HEK293 (cell line): ENCODE measurements at regions of chr16 and their contacts with region 1.

Region 1: GRCh38 chr16:4517812-4518680 is 20.5 kb downstream of the CDIP1 start:
- H3K4me3 ChIP-seq: no peak overlapping the region
- H3K27ac ChIP-seq: no peak overlapping the region
- H3K4me1 ChIP-seq: no peaks in the 10 kb centered on the region
- CTCF ChIP-seq: peak; percentile 74

Region 2: GRCh38 chr16:4461250-4462085 is 56.6 kb before region 1 on chr16:
- CTCF ChIA-PET with region 1: no interaction called
- POLR2A ChIA-PET with region 1: no interaction called
- H3K4me3 ChIP-seq: no peak overlapping the region
- H3K27ac ChIP-seq: no peak overlapping the region
- H3K4me1 ChIP-seq: no peaks in the 10 kb centered on the region
- CTCF ChIP-seq: no peak

Region 3: GRCh38 chr16:4529085-4530060 is 11.3 kb after region 1 on chr16:
- CTCF ChIA-PET with region 1: interaction called, 13 read pairs
- POLR2A ChIA-PET with region 1: no interaction called
- H3K4me3 ChIP-seq: no peak overlapping the region
- H3K27ac ChIP-seq: no peak overlapping the region
- H3K4me1 ChIP-seq: peaks cover 3% of the 10 kb centered on the region; the same call in 1 of the 2 replicates
- CTCF ChIP-seq: no peak

Region 4: DNA sequence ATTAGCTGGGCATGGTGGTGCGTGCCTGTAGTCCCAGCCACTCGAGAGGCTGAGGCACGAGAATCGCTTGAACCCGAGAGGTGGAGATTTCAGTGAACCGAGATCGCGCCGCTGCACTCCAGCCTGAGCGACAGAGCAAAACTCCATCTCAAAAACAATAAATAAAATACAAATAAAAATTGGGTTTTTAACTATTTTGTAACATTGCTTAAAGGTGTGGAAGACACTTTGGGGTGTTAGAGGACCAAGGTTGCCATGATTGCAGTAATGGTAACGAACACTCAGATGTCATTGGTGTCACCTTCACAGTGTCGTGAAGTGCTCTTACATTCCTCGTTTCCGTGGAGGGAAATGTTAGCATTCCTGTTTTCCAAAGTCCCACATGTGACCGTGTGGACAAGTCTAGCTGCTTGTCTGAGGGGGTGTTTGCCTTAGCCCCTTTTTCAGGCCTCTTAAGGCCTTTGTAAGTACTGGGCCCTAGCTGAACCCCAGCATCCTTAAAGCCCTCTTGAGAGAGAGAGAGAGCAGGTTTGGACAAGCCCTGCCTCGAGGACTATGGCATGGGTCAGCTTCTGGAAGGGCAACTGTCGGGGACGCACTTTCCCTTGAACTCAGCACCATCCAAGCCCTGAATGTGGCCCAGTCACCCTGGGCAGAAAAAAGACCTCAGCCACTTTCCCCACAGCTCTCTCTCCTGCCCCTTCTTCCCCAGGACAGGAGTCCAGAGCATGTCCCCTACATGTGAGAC is 46.8 kb after region 1 on chr16:
- CTCF ChIA-PET with region 1: no interaction called
- POLR2A ChIA-PET with region 1: no interaction called
- H3K4me3 ChIP-seq: no peak overlapping the region
- H3K27ac ChIP-seq: no peak overlapping the region
- H3K4me1 ChIP-seq: no peaks in the 10 kb centered on the region
- CTCF ChIP-seq: no peak

Region 5: DNA sequence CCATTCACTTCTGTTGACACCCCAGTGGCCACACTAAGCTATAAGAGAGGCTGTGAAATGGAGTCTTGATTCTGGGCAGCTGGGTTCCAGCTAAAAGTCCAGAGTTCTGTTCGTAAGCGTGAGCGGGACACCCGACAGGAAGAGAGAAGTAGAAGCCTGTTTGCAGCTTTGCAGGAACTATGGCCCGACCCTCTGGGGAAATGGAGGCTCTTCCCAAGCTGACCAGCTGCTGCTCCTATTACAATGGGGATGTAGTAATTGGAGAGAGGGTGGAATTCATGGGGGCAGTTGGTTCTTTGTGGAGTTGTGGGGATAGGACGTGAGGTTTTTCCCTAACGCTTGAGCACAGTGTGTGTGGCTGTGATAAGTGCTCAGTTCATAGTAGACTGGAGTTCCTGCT is 68.2 kb after region 1 on chr16:
- CTCF ChIA-PET with region 1: interaction called, 28 read pairs
- POLR2A ChIA-PET with region 1: no interaction called
- H3K4me3 ChIP-seq: no peak overlapping the region
- H3K27ac ChIP-seq: no peak overlapping the region
- H3K4me1 ChIP-seq: no peaks in the 10 kb centered on the region
- CTCF ChIP-seq: no peak